Activated B cell treated with CpG ODN at 0.5 μM for 24 hours (primary cell): ENCODE measurements at regions of chr15 and their contacts with region 1.

Region 1: DNA sequence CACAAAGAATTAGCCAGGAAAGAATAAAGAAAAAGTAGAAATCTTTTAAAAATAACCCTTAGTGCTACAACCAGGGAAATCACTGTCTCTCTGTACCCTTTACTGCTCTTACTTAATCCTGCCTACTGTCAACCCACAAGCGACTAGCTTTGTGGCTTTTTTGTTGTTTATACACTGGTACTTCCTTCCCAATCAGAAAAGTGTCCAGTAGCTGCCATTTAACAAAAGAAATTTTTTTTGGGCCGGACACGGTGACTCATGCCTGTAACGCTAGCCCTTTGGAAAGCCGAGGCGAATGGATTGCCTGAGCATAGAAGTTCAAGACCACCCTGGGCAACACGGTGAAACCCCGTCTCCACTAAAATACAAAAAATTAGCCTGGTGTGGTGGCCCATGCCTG is 13.8 kb upstream of the FAM219B start:
- DNase-seq: no peak
- ATAC-seq: no peak
- H3K4me3 Mint-ChIP-seq: no peak overlapping the region
- H3K27ac Mint-ChIP-seq: no peak overlapping the region
- H3K4me1 Mint-ChIP-seq: no peaks in the 10 kb centered on the region
- H3K27me3 Mint-ChIP-seq: no peaks in the 10 kb centered on the region
- CTCF ChIP-seq: no peak

Region 2: GRCh38 chr15:73927476-73928240 is 992.8 kb before region 1 on chr15:
- CTCF ChIA-PET with region 1: no interaction called
- POLR2A ChIA-PET with region 1: no interaction called
- intact Hi-C with region 1: loop called (anchors 5 kb)
- DNase-seq: peak; percentile 70
- ATAC-seq: peak; percentile 91
- H3K4me3 Mint-ChIP-seq: peak overlapping the region; percentile 70
- H3K27ac Mint-ChIP-seq: no peak overlapping the region
- H3K4me1 Mint-ChIP-seq: peaks cover 12% of the 10 kb centered on the region
- H3K27me3 Mint-ChIP-seq: peaks cover 32% of the 10 kb centered on the region
- CTCF ChIP-seq: no peak